ENCODE measurements at regions of chr21 and their contacts with region 1.

Region 1: GRCh38 chr21:36060159-36060921 is at the start of gene SETD4:
- DNase-seq: peak; percentile 91
- H3K4me3 Mint-ChIP-seq: peak within 1 kb of the TSS; percentile 91
- H3K27ac Mint-ChIP-seq: peak within 1 kb of the TSS; percentile 98
- H3K4me1 Mint-ChIP-seq: peaks cover 14% of the 10 kb centered on the region
- H3K27me3 Mint-ChIP-seq: no peaks in the 10 kb centered on the region
- total RNA-seq, gene SETD4: 21.4 and 23.8 TPM in 2 replicates

Region 2: DNA sequence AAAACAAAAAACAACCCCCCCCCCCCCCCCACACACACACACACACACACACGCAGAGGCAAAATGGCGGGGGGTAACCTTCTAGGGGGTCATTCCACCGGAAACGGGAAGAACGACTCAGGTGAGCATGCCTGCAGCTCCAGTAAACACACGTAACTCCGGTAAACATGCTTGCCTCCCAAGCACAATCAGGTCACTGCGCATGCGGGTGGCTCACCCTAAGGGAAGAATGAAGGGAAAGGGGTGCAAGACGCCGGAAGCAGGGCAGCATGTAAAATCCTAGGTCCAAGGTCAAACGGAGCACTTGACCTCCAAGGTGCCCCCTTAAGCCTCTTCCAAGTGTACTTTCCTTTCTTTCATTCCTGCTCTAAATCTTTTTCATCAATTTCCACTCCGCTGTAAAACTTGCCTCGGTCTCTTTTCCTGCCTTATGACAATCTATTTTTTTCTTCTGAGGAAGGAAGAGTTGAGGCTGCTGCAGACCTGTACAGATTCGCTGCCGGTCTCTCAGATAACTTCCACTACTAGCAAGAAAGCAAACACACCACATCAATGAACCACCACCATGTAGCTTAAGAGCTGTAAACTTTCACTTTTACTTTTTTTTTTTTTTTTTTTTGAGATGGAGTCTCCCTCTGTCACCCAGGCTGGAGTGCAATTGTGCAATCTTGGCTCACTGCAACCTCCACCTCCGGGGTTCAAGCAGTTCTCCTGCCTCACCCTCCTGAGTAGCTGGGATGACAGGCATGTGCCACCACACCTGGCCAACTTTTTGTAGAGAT is 53.5 kb after region 1 on chr21:
- intact Hi-C with region 1: loop called (anchors 1 kb)
- DNase-seq: peak; percentile 47
- H3K4me3 Mint-ChIP-seq: peak overlapping the region; percentile 76
- H3K27ac Mint-ChIP-seq: peak overlapping the region; percentile 88
- H3K4me1 Mint-ChIP-seq: peaks cover 9% of the 10 kb centered on the region
- H3K27me3 Mint-ChIP-seq: peaks cover 3% of the 10 kb centered on the region

Region 3: DNA sequence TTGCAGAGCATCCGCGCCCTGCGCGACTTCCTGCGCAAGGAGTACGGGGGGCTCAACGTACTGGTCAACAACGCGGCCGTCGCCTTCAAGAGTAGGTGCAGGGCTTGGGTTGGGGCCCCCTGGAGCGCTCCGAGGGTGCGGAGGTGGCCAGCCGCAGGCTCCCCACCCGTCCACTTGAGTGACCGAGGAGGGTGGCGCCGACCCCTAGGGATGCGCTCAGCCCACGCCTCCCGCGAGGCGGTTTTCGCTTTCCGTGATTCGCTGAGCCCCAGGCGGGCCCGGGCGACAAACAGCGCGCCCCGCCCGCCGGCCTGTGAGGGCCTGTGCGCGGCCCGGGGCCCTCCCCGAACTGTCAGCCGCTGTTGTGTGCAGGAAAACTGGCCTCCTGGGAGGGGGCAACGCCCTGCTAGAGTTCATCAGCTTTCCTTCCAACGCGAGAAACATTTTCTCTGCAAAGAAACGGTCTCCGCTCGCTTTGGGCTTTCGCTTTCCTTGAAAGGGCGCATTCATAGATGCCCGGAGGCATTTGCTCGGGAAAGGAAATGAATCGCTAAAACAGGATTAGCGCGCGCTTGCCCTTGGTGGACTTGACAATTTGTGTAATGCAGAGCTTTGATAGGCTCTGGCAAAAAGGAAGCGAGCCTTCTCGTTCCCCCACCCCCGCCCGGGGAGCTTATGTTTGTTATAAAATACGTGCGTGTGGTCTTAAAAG is 75.2 kb after region 1 on chr21:
- intact Hi-C with region 1: no loop called
- DNase-seq: peak; percentile 69
- H3K4me3 Mint-ChIP-seq: peak overlapping the region; percentile 90
- H3K27ac Mint-ChIP-seq: peak overlapping the region; percentile 92
- H3K4me1 Mint-ChIP-seq: peaks cover 24% of the 10 kb centered on the region
- H3K27me3 Mint-ChIP-seq: no peaks in the 10 kb centered on the region

Measured in activated T-helper 2 cell treated with anti-CD3 and anti-CD28 coated beads, Interferon-gamma antibody, Interleukin-2, Interleukin-4, amounts not matched to agents 10 μg/mL and 5 μg/mL and 100 μg/mL, durations not matched to agents 14 hours and 24 hours and 36 hours (primary cell).